ENCODE measurements at regions of chr4 and their contacts with region 1.

Region 1: DNA sequence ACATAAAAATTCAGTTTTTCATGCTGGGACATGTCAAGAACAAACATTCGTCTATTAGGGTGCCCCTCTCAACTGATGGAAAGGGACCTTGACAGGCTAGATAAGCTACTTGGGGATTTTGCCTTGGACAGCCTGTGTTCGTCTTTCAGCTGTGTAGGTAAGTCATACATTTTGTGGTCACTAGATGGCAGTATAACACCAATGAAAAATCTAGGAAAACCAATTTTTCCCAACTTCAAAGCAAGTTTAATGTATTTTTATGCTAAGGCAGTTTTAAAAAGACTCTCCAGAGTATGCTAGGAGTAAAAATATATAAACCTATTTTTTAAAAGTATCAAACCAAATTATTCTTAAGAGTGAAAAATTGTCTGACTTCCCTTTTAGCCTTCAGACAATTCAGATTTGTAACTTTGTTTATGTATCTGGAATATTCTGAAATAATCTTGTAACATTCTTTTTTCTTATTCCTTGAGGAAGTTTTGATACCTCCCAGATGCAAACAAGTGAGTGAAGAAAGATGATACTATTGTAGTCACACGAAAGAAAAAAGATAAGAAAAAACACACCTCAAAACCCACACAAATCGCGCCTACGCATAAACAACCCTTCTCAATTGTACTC is 158.3 kb downstream of the CPE start:
- DNase-seq: no peak
- ATAC-seq: peak in 3 of 4 donors; percentile 48 to 61 (median 54)
- H3K4me3 ChIP-seq: no peak overlapping the region
- H3K27ac ChIP-seq: no peak overlapping the region
- H3K4me1 ChIP-seq: no peaks in the 10 kb centered on the region
- H3K27me3 ChIP-seq: peaks cover 0 to 5% (median 0%) of the 10 kb centered on the region in 9 donors
- CTCF ChIP-seq: peak; percentile 61 to 86 (median 78)
- POLR2A ChIP-seq: no peak

Region 2: DNA sequence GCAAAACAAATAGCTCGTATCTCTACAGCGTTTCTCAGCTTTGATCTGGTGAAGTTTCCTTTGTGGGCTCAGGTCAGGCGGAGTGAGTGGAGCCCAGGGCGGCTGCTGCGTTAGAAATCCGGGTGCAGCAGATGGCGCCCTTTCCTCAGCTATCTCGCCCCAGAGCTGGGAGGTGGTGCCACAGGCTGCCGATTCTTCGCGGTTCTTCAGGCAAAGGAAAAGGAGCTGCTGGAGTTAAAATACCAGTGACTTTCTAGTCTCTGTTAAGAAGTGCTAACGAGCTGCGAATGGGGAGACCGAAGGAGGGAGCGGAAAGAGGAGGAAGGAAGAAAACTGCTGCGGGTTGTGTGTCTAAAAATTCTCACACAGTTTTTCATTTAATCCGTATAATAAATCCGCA is 43.8 kb before region 1 on chr4:
- intact Hi-C with region 1: loop called in 2 of 10 experiments (anchors 2 to 5 kb)
- DNase-seq: peak; percentile 50 to 83 (median 64)
- ATAC-seq: peak; percentile 75 to 97 (median 93)
- H3K4me3 ChIP-seq: peak overlapping the region in 2 of 12 donors; percentile 10 to 32
- H3K27ac ChIP-seq: no peak overlapping the region
- H3K4me1 ChIP-seq: peaks cover 0 to 4% (median 0%) of the 10 kb centered on the region in 12 donors
- H3K27me3 ChIP-seq: peaks cover 0 to 3% (median 0%) of the 10 kb centered on the region in 9 donors
- CTCF ChIP-seq: peak; percentile 47 to 80 (median 66)
- POLR2A ChIP-seq: no peak

Region 3: DNA sequence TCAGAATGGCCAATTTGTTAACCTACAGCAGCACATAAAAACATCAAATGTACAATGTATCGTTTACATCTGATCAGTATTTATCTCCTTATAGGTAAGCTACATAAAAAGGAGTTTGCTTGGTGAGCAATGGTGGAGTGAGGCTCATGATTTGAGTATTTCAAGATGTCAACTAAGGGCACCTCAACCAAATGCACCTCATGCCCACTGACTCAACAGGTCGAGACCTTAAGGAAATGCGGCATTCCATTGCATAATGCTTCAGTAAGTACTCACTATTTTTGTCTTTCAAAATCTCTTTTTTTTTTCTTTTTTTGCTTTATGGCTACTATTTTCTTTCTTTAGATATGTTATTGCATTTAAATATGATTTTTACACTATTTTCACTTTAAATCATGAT is 154.9 kb after region 1 on chr4:
- intact Hi-C with region 1: loop called in 1 of 10 experiments (anchors 10 kb)
- DNase-seq: no peak
- ATAC-seq: no peak
- H3K4me3 ChIP-seq: no peak overlapping the region
- H3K27ac ChIP-seq: no peak overlapping the region
- H3K4me1 ChIP-seq: no peaks in the 10 kb centered on the region
- H3K27me3 ChIP-seq: no peaks in the 10 kb centered on the region
- CTCF ChIP-seq: no peak
- POLR2A ChIP-seq: no peak

Region 4: DNA sequence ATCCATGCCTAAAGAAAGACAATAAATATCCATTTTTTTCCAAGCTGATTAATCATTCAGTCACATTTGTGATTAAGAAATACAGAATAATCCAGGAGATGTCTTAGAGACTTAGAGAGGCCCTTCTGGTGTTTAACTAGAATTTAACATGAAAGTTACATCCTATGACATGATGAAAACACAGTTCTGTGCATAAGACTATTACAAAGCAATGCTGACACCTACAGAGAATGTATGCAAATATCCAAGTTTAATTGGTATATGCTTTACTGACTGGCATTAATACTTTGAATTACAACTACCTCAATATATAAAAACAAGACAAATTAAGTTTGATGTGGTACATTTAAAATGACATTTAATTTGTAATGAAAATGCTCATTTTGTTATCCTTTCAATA is 318.1 kb after region 1 on chr4:
- intact Hi-C with region 1: loop called in 7 of 10 experiments (anchors 5 to 10 kb)
- DNase-seq: no peak
- ATAC-seq: no peak
- H3K4me3 ChIP-seq: no peak overlapping the region
- H3K27ac ChIP-seq: no peak overlapping the region
- H3K4me1 ChIP-seq: no peaks in the 10 kb centered on the region
- H3K27me3 ChIP-seq: no peaks in the 10 kb centered on the region
- CTCF ChIP-seq: peak in 3 of 12 donors; percentile 17 to 21 (median 20)
- POLR2A ChIP-seq: no peak

Region 5: DNA sequence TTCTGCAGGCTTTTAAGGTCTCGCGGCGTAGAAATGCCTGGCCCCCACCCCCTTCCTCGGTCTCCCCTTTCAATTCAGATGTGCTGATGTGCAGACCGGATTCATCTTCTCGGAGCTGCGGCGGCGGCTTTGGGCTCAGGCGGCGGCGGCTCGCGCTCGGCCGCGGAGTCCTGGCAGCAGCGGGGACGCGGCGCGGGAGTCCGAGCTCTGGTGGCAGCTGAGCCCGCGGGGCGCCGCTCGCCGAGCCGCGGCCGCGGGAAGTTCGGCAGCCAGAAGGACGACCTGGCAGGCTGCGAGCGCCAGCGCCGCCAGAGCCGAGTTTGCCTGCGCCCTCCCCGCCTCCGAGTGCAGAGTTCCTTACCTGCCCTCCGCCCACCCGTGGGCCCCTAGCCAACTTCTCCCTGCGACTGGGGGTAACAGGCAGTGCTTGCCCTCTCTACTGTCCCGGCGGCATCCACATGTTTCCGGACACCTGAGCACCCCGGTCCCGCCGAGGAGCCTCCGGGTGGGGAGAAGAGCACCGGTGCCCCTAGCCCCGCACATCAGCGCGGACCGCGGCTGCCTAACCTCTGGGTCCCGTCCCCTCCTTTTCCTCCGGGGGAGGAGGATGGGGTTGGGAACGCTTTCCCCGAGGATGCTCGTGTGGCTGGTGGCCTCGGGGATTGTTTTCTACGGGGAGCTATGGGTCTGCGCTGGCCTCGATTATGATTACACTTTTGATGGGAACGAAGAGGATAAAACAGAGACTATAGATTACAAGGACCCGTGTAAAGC is 336.3 kb after region 1 on chr4:
- intact Hi-C with region 1: loop called in 1 of 10 experiments (anchors 10 kb)
- DNase-seq: peak; percentile 25 to 66 (median 29)
- ATAC-seq: peak in 3 of 4 donors; percentile 52 to 87 (median 82)
- H3K4me3 ChIP-seq: peak overlapping the region; percentile 37 to 73 (median 60)
- H3K27ac ChIP-seq: peak overlapping the region in 6 of 12 donors; percentile 19 to 55 (median 35)
- H3K4me1 ChIP-seq: peaks cover 0 to 28% (median 2%) of the 10 kb centered on the region in 12 donors
- H3K27me3 ChIP-seq: peaks cover 0 to 41% (median 0%) of the 10 kb centered on the region in 9 donors
- CTCF ChIP-seq: no peak
- POLR2A ChIP-seq: no peak

Region 6: GRCh38 chr4:166091912-166092510 is 554.9 kb after region 1 on chr4:
- intact Hi-C with region 1: loop called (anchors 1 to 5 kb)
- DNase-seq: no peak
- ATAC-seq: no peak
- H3K4me3 ChIP-seq: no peak overlapping the region
- H3K27ac ChIP-seq: no peak overlapping the region
- H3K4me1 ChIP-seq: no peaks in the 10 kb centered on the region
- H3K27me3 ChIP-seq: no peaks in the 10 kb centered on the region
- CTCF ChIP-seq: peak; percentile 65 to 89 (median 76)
- POLR2A ChIP-seq: no peak

Region 7: GRCh38 chr4:166252487-166253402 is 715.6 kb after region 1 on chr4:
- intact Hi-C with region 1: loop called in 1 of 10 experiments (anchors 10 kb)
- DNase-seq: no peak
- ATAC-seq: no peak
- H3K4me3 ChIP-seq: no peak overlapping the region
- H3K27ac ChIP-seq: no peak overlapping the region
- H3K4me1 ChIP-seq: no peaks in the 10 kb centered on the region
- H3K27me3 ChIP-seq: no peaks in the 10 kb centered on the region
- CTCF ChIP-seq: peak in 11 of 12 donors; percentile 20 to 54 (median 29)
- POLR2A ChIP-seq: no peak

Measured in heart left ventricle (tissue), 16 donors.